ENCODE measurements at regions of chr12 and their contacts with region 1.

Region 1: GRCh38 chr12:122951979-122952892 is 14.0 kb downstream of the ABCB9 start:
- H3K4me3 Mint-ChIP-seq: no peak overlapping the region
- H3K27ac Mint-ChIP-seq: no peak overlapping the region
- H3K4me1 Mint-ChIP-seq: peaks cover 27% of the 10 kb centered on the region
- H3K27me3 Mint-ChIP-seq: no peaks in the 10 kb centered on the region

Region 2: GRCh38 chr12:122793685-122794106 is 158.5 kb before region 1 on chr12:
- intact Hi-C with region 1: loop called (anchors 2 kb)
- H3K4me3 Mint-ChIP-seq: no peak overlapping the region
- H3K27ac Mint-ChIP-seq: no peak overlapping the region
- H3K4me1 Mint-ChIP-seq: peaks cover 5% of the 10 kb centered on the region
- H3K27me3 Mint-ChIP-seq: no peaks in the 10 kb centered on the region

Region 3: GRCh38 chr12:122825773-122826724 is 126.2 kb before region 1 on chr12:
- intact Hi-C with region 1: no loop called
- H3K4me3 Mint-ChIP-seq: no peak overlapping the region
- H3K27ac Mint-ChIP-seq: no peak overlapping the region
- H3K4me1 Mint-ChIP-seq: no peaks in the 10 kb centered on the region
- H3K27me3 Mint-ChIP-seq: peaks cover 9% of the 10 kb centered on the region

Region 4: DNA sequence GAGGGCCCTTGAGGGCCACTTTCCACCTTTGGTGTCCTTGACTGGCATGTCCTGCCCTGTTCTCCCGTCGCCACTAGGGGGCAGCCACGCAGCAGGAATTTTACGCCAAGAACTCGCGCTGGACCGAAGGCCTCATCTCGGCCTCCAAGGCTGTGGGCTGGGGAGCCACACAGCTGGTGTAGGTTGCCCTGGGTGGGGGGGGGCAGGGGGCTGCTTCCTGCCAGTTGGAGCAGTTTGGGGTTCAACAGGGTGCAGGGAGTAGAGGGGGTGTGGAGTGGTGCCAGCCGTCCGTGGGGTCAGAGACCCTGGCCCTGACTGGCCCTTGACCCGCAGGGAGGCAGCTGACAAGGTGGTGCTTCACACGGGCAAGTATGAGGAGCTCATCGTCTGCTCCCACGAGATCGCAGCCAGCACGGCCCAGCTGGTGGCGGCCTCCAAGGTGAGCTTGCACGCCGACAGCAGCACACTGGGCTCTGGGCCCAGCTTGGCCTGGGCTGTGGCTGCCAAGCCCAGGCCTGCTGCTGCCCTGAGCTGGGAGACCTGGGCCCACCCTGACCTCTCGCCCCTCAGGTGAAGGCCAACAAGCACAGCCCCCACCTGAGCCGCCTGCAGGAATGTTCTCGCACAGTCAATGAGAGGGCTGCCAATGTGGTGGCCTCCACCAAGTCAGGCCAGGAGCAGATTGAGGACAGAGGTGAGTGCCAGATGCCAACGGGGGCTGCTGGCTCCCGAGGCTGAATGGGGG is 91.7 kb before region 1 on chr12:
- intact Hi-C with region 1: loop called (anchors 1 kb)
- H3K4me3 Mint-ChIP-seq: no peak overlapping the region
- H3K27ac Mint-ChIP-seq: no peak overlapping the region
- H3K4me1 Mint-ChIP-seq: no peaks in the 10 kb centered on the region
- H3K27me3 Mint-ChIP-seq: peaks cover 5% of the 10 kb centered on the region

Region 5: DNA sequence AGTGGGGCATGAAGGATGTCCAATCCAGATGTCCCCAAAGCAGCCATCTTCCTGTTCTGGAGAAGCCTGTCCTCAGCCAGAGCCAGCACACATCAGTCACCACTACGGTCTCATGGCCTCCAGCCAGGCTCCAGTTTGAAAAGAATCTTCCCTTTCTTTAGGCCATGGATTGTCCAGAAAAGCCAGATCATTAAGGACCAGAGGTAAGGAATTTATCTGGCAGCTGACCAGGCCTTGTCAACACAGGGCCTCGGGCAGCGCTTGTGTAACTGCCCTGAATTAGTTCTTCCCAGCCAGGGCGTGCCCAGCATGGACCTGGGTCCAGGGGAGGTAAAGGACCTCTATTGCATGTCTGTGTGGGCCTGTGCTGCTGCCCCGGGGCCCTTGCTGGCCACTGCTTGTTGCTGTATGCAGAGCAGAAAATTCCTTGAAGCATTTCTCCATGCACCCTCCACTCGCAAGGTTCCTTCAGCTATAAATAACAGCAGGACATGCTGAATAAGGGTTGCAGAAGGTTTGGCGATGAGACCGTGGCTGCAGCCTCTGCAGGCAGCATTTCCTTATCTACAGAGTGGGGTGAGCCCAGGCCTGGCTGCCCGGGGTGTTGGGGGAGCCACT is 34.6 kb before region 1 on chr12:
- intact Hi-C with region 1: no loop called
- H3K4me3 Mint-ChIP-seq: no peak overlapping the region
- H3K27ac Mint-ChIP-seq: no peak overlapping the region
- H3K4me1 Mint-ChIP-seq: peaks cover 27% of the 10 kb centered on the region
- H3K27me3 Mint-ChIP-seq: peaks cover 2% of the 10 kb centered on the region